Mammary epithelial cell (primary cell): ENCODE measurements at regions of chr6 and their contacts with region 1.

Region 1: DNA sequence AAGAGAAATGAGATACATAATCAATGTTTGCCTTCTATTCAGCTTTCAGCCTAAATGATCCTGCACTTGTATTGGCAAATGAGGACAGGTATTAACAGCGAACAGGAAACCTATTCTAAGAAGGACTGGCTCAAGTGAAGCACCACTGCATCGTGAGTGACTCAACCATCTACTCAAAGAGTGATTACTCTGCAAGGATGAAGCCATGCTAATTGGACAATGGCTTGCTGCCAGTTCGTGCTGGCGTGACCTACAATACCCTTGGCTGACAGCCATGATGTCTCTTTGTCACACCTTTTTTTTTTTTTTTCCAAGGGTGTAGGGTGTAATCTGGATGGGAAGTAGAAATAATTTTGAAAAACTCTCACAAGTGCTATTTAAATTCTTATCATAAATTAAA is 104.9 kb downstream of the GJA10 start:
- DNase-seq: peak; percentile 77
- H3K4me3 ChIP-seq: no peak overlapping the region
- H3K27ac ChIP-seq: no peak overlapping the region
- H3K4me1 ChIP-seq: peaks cover 44% of the 10 kb centered on the region
- H3K27me3 ChIP-seq: no peaks in the 10 kb centered on the region
- CTCF ChIP-seq: no peak

Region 2: GRCh38 chr6:90088009-90088408 is 88.9 kb after region 1 on chr6:
- CTCF ChIA-PET with region 1: no interaction called
- dilution Hi-C with region 1: no loop called
- in situ Hi-C with region 1: no loop called
- intact Hi-C with region 1: loop called (anchors 5 kb)
- DNase-seq: peak; percentile 97
- H3K4me3 ChIP-seq: no peak overlapping the region
- H3K27ac ChIP-seq: peak overlapping the region; percentile 72
- H3K4me1 ChIP-seq: peaks cover 31% of the 10 kb centered on the region
- H3K27me3 ChIP-seq: no peaks in the 10 kb centered on the region
- CTCF ChIP-seq: no peak